Activated CD4-positive, alpha-beta memory T cell treated with anti-CD3 and anti-CD28 coated beads for 36 hours (primary cell): ENCODE measurements at regions of chr2 and their contacts with region 1.

Region 1: GRCh38 chr2:168920504-168921157 is 19.5 kb downstream of the G6PC2 start:
- DNase-seq: no peak
- H3K4me3 Mint-ChIP-seq: no peak overlapping the region
- H3K27ac Mint-ChIP-seq: no peak overlapping the region
- H3K4me1 Mint-ChIP-seq: peaks cover 8% of the 10 kb centered on the region
- H3K27me3 Mint-ChIP-seq: peaks cover 19% of the 10 kb centered on the region

Region 2: GRCh38 chr2:168705534-168706470 is 214.8 kb before region 1 on chr2:
- CTCF ChIA-PET with region 1: no interaction called
- POLR2A ChIA-PET with region 1: no interaction called
- intact Hi-C with region 1: loop called (anchors 10 kb)
- DNase-seq: no peak
- H3K4me3 Mint-ChIP-seq: no peak overlapping the region
- H3K27ac Mint-ChIP-seq: no peak overlapping the region
- H3K4me1 Mint-ChIP-seq: no peaks in the 10 kb centered on the region
- H3K27me3 Mint-ChIP-seq: no peaks in the 10 kb centered on the region

Region 3: GRCh38 chr2:168773719-168774521 is 146.7 kb before region 1 on chr2:
- CTCF ChIA-PET with region 1: interaction called, 12 read pairs
- POLR2A ChIA-PET with region 1: no interaction called
- intact Hi-C with region 1: loop called (anchors 1 kb)
- DNase-seq: peak; percentile 57
- H3K4me3 Mint-ChIP-seq: no peak overlapping the region
- H3K27ac Mint-ChIP-seq: no peak overlapping the region
- H3K4me1 Mint-ChIP-seq: no peaks in the 10 kb centered on the region
- H3K27me3 Mint-ChIP-seq: no peaks in the 10 kb centered on the region